ENCODE measurements at regions of chr5 and their contacts with region 1.

Region 1: DNA sequence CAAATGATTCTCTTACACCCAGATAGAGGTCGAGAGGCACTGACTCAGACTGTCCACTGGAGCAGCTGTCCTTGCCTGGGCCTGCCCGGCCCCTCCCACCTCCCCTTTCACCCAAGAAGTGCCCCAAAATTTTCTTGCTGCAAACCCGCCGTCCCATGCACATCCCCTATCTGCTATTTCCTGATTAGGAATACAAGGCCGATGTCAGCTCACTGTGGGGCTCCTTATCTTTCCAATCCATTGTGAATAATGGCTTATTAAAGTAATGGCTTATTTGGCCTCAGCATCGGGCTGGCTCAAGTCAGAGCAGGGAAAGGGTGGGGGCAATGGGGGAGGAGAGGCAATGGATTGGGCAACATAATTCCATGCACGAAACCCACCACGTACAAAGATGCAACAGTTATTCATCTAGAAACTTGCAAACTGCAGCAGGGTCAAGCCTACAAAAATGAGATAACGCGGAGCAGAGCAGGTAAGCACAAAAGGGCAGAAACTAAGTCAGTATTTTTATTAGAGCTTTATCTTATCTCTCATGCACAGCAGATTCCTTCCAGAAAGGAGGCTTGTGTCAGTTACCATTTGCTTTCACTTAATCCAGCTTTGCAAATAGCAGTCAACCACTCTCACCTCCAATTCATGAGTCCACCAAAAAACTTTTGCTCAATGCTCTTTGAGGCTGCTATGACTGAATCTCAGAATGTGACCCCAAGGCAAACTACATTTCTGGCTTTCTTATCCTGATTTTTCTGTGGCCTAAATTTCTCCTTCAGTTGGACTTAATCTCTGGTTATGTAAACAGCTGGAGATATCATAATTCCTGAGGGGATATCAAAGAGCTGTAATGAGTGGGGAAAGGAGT is 138.2 kb upstream of the OSMR start:
- DNase-seq: no peak
- ATAC-seq: peak; percentile 26 to 57 (median 50)
- H3K4me3 ChIP-seq: no peak overlapping the region
- H3K27ac ChIP-seq: no peak overlapping the region
- H3K4me1 ChIP-seq: peaks cover 0 to 36% (median 5%) of the 10 kb centered on the region in 12 donors
- H3K27me3 ChIP-seq: no peaks in the 10 kb centered on the region
- CTCF ChIP-seq: no peak
- POLR2A ChIP-seq: no peak

Region 2: GRCh38 chr5:38621840-38622437 is 85.6 kb before region 1 on chr5:
- intact Hi-C with region 1: loop called in 1 of 10 experiments (anchors 5 kb)
- DNase-seq: no peak
- ATAC-seq: no peak
- H3K4me3 ChIP-seq: no peak overlapping the region
- H3K27ac ChIP-seq: no peak overlapping the region
- H3K4me1 ChIP-seq: peaks cover 0 to 6% (median 0%) of the 10 kb centered on the region in 12 donors
- H3K27me3 ChIP-seq: no peaks in the 10 kb centered on the region
- CTCF ChIP-seq: no peak
- POLR2A ChIP-seq: no peak

Region 3: GRCh38 chr5:38780950-38781349 is 73.4 kb after region 1 on chr5:
- intact Hi-C with region 1: no loop called
- DNase-seq: peak in 4 of 5 donors; percentile 70 to 81 (median 75)
- ATAC-seq: peak in 3 of 4 donors; percentile 58 to 75 (median 64)
- H3K4me3 ChIP-seq: no peak overlapping the region
- H3K27ac ChIP-seq: no peak overlapping the region
- H3K4me1 ChIP-seq: peaks cover 0 to 45% (median 26%) of the 10 kb centered on the region in 12 donors
- H3K27me3 ChIP-seq: no peaks in the 10 kb centered on the region
- CTCF ChIP-seq: peak in 11 of 12 donors; percentile 27 to 58 (median 36)
- POLR2A ChIP-seq: no peak

Measured in heart left ventricle (tissue), 16 donors.